ENCODE measurements at regions of chr2 and their contacts with region 1.

Region 1: DNA sequence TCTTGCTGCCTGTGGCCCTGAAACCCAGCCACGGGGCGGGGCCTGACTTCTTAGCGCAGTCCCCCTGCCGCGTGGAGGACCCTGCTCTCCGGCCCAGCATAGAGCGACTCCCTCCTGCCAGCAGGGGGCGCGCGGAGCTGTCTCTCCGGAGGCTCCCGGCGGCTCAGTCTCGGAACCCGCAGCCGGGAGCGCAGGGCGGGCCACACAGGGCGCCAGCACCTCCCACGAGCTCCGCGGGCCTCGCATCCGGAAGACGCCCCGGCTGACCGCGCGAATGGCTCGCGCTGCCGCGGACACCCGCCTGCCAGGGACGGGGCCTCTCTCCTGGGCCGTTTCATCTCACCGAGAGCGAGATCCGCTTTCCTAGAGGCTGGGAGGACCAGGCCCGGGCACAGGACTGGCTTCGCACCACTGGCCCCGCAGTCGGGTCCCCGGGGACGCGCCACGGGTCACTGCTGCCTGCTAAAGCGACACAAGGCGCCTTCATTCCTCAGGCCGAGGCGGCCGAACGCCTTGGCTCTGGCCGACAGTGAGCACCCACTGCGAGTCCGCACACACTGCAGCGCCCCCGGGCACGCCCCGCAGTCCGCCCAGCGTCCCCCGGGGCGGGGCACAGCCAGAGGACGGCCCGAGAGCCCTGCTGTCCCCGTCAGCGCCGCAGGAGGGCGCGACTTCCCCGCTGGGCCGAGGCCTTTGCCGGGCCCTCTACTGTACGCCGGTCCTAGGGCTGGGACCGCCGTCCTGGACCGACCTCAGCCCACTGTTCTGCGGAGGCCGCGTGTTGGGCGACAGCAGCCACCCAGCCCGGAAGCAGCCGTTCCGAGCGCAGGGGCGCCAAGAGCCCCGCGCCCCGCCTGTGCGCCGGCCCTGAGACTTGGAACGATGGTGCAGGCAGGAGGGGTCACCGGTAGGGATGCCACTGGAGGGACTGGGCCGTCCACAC is 39.0 kb upstream of the ARHGEF4 start:
- DNase-seq: peak; percentile 96
- ATAC-seq: peak; percentile 92
- H3K4me3 Mint-ChIP-seq: peak overlapping the region; percentile 62
- H3K27ac Mint-ChIP-seq: no peak overlapping the region
- H3K4me1 Mint-ChIP-seq: peaks cover 3% of the 10 kb centered on the region
- H3K27me3 Mint-ChIP-seq: peaks cover 3% of the 10 kb centered on the region

Region 2: GRCh38 chr2:130727286-130728018 is 70.3 kb before region 1 on chr2:
- CTCF ChIA-PET with region 1: interaction called, 4 read pairs
- POLR2A ChIA-PET with region 1: no interaction called
- intact Hi-C with region 1: loop called in 1 of 2 experiments (anchors 2 kb)
- DNase-seq: peak; percentile 93
- ATAC-seq: peak; percentile 97
- H3K4me3 Mint-ChIP-seq: peak overlapping the region; percentile 67
- H3K27ac Mint-ChIP-seq: peak overlapping the region; percentile 55
- H3K4me1 Mint-ChIP-seq: peaks cover 3% of the 10 kb centered on the region
- H3K27me3 Mint-ChIP-seq: peaks cover 8% of the 10 kb centered on the region

Region 3: GRCh38 chr2:130759910-130760753 is 37.6 kb before region 1 on chr2:
- CTCF ChIA-PET with region 1: no interaction called
- POLR2A ChIA-PET with region 1: no interaction called
- intact Hi-C with region 1: no loop called
- DNase-seq: no peak
- ATAC-seq: no peak
- H3K4me3 Mint-ChIP-seq: no peak overlapping the region
- H3K27ac Mint-ChIP-seq: no peak overlapping the region
- H3K4me1 Mint-ChIP-seq: no peaks in the 10 kb centered on the region
- H3K27me3 Mint-ChIP-seq: peaks cover 21% of the 10 kb centered on the region

Region 4: DNA sequence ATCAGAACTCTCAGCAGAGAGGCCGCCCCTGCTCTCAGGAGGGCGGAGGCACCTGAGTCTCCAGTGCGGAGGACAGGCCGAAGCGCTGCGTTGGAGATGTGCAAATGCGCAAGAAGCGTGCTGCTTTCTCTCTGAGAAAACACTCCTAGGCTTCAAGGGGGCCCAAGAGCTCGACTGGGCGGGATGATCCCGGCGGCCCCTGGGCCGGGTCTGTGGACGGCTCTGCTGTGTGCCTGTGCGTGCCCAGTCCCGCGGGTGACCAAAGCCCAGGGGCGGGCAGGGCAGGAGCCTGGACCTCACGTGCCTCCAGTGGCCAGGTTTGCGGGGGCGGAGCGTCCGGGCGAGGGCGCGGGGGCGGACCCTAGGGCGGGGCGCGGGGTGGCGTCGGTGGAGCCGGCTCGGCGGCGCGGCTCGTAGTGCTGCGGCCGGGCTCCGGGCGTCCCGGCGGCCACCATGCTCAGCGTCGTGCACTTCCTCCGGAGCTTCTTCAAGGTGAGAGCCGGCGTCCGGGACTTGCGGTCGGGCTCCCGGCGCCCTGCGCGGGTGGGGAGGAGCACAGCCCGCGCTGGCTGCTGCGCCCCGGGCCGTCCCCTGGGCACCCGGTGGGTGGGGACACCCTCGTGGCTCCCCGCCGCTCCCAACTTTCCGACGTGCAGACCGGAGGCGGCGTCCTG is 38.9 kb after region 1 on chr2 and contains the start of gene ARHGEF4:
- CTCF ChIA-PET with region 1: interaction called, 3 read pairs
- POLR2A ChIA-PET with region 1: no interaction called
- intact Hi-C with region 1: loop called (anchors 5 kb)
- DNase-seq: peak; percentile 48
- ATAC-seq: peak; percentile 71
- H3K4me3 Mint-ChIP-seq: no peak within 1 kb of the TSS
- H3K27ac Mint-ChIP-seq: no peak within 1 kb of the TSS
- H3K4me1 Mint-ChIP-seq: no peaks in the 10 kb centered on the region
- H3K27me3 Mint-ChIP-seq: peaks cover 42% of the 10 kb centered on the region
- total RNA-seq, gene ARHGEF4: 1.2 to 1.9 TPM

Region 5: DNA sequence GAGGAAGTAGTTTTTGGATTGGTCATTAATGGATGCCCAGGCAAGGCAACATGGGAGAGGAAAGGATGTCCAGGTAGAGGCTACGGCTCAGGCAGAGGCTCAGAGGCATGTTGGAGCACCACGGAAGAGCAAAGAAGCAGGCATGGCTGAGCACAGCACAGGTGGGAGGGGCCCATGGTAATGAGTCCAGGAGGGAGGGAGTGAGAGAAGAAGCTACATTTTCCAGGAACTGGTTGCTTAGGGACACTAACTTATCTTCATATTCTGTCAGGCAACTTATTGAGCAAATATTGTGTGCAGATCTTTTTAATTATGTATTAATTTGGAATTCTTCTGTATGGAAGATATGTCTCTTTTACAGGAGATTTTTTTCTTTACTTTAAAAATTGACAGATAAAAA is 81.2 kb after region 1 on chr2:
- CTCF ChIA-PET with region 1: interaction called, 156 read pairs
- POLR2A ChIA-PET with region 1: no interaction called
- intact Hi-C with region 1: no loop called
- DNase-seq: no peak
- ATAC-seq: no peak
- H3K4me3 Mint-ChIP-seq: no peak overlapping the region
- H3K27ac Mint-ChIP-seq: no peak overlapping the region
- H3K4me1 Mint-ChIP-seq: peaks cover 2% of the 10 kb centered on the region
- H3K27me3 Mint-ChIP-seq: peaks cover 19% of the 10 kb centered on the region

Region 6: DNA sequence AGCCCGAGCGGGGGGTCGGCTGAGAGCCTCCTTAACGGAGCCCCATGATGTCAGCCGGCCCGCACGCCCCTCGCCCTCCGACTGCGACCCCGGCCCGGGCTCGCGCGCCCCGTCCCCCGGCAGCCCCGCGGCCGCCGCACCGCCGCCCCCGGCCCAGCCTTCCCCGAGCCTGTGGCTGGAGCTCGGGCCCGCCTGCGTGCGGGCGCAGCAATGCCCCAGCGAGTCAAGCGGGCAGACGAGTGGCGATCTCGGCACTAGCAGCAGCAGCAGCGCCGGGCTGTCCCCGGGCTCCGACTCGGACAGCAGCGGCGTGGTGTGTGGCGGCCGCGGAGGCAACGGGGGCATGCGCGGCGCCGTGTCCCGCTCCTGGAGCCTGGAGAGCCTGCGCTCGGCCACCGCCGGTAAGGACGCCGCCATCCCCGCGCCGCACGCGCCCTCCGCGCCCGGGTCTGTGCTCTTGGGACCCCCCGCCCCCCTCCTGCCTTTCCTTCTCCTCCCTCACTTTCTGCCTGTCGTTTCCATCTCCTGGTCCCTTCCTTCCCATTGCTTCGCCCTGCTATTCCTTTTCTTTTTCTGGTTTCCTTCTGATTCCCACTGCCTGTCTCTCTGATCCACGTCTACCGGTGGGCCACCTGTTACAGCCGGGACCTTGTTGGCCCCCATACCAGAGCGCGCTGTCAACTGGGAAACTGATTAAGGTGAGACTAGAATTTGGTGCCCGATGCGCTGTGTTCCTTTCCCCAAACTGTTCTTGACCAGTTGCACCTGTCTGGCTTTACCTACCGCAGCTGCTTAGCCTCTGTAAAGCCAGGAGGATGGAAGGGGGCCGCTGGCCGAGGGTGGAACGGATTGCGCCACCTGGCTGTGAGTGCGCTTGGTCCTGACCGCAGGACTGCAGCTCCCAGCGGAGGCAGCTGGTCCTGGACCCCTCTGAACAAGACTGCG is 166.4 kb after region 1 on chr2:
- CTCF ChIA-PET with region 1: interaction called, 6 read pairs
- POLR2A ChIA-PET with region 1: no interaction called
- intact Hi-C with region 1: loop called (anchors 1 kb)
- DNase-seq: peak; percentile 47
- ATAC-seq: peak; percentile 30
- H3K4me3 Mint-ChIP-seq: peak overlapping the region; percentile 42
- H3K27ac Mint-ChIP-seq: no peak overlapping the region
- H3K4me1 Mint-ChIP-seq: peaks cover 6% of the 10 kb centered on the region
- H3K27me3 Mint-ChIP-seq: peaks cover 40% of the 10 kb centered on the region

Measured in activated CD4-positive, alpha-beta T cell treated with anti-CD3 and anti-CD28 coated beads for 36 hours (primary cell).